AG04449 (cell line): ENCODE measurements at regions of chr12 and their contacts with region 1.

Region 1: DNA sequence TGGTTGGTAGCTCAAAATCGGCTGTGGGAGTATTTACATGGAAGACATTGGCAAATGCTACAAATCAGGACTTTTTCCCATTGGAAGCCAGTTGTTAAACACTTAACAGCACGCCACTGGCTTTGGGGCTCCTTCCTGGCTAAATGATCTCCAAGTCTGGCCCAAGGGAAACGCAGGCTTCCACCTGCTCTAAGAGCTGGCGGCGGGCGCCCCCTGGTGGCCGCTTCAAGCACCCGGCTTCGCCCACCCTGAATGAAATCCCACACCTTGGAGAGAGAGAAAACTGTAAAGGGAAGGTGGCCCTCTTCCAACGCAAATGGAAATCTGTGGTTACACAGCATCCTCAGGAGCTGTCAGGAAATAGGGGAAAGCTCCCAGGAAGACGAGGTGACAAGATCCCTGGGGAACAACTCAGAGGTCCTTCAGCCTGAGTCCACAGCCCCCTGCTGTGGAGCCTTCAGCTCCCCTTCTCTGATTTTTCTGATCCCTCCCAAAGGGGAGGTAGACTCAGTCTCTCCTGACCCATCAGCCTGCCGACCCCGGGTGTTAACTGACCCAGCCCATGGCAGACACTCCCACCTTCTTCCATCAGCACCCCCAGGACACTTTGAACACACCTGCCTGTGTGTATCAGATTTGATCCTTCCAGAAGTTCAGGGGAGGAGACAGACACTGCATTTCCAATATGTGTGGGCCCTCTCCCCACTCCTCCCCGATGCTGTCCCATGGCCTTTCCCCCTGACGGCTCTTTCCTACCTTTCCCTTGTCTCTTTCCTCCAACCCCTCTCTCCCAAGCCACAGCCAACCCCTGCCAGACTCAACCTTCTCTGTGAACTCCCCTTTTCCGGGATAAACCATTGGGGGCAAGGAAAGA is 15.4 kb downstream of the SELPLG start:
- DNase-seq: peak; percentile 17
- H3K4me3 ChIP-seq: no peak overlapping the region
- CTCF ChIP-seq: peak; percentile 91

Region 2: DNA sequence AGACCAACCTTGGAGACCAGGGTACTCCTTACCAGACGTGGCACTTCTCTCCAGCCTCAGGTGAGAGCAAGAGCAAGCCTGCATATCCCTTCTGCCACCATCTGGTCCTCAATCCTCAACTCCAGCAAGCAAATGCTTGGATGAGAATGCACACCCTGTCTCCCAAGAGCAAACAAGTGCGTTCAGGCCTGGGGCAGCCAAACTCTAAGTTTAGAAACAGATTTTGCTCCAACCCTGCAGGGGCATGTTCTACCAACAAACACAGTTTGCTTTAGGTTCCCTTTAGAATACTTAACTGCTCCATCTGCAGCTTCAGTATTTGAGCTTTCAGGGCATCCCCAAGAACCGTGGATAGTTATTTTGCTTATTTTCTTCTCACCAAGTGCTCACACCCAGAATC is 159.2 kb before region 1 on chr12:
- CTCF ChIA-PET with region 1: no interaction called
- POLR2A ChIA-PET with region 1: no interaction called
- DNase-seq: no peak
- H3K4me3 ChIP-seq: no peak overlapping the region
- CTCF ChIP-seq: no peak

Region 3: DNA sequence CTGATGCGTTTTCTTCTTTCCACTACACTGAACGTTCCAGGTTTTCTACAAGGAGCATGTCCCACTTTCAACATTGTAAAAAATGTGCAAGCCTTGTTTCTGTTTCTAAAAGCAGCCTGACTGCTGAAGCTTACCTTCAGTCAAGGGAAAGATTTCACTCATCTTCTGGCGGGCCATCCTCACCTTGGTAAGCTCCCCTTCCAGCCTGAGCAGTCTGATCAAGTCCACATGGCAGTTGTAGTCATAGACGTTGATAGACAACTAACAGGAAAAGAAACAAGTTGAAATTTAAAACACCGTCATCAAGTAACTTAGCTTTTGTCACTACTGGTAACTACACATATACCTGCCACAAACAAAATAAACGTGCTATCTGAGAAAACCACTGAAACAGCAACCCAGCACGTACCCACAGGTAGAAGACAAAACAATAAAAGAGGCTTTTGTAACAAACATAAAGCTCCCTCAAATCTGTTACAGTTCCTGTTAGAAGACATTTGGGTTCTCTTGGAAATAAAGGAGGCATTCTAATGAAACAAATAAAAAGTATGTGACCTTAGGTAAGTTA is 69.3 kb before region 1 on chr12:
- CTCF ChIA-PET with region 1: interaction called, 13 read pairs
- POLR2A ChIA-PET with region 1: no interaction called
- DNase-seq: no peak
- H3K4me3 ChIP-seq: no peak overlapping the region
- CTCF ChIP-seq: no peak

Region 4: DNA sequence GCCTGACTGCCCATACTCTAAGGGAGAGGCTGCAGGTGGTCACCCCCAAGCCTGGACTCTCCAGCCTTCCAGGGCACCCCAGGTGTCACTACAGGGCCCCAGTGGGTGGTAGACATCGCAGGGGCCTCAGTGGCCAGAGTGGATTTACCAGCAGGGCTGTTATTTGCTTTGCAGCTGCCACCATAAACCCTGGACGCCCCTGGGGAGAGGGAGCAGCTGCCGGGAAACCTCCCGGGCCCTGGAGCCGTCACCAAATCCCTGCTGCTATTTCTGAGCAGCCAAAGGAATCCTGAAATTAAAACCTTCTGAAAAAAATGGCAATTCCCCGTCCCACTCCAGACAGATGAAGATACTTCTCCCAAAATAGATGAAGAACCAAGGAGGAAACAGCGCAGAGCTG is 34.3 kb before region 1 on chr12:
- CTCF ChIA-PET with region 1: interaction called, 51 read pairs
- POLR2A ChIA-PET with region 1: interaction called, 3 read pairs
- DNase-seq: no peak
- H3K4me3 ChIP-seq: no peak overlapping the region
- CTCF ChIP-seq: no peak

Region 5: DNA sequence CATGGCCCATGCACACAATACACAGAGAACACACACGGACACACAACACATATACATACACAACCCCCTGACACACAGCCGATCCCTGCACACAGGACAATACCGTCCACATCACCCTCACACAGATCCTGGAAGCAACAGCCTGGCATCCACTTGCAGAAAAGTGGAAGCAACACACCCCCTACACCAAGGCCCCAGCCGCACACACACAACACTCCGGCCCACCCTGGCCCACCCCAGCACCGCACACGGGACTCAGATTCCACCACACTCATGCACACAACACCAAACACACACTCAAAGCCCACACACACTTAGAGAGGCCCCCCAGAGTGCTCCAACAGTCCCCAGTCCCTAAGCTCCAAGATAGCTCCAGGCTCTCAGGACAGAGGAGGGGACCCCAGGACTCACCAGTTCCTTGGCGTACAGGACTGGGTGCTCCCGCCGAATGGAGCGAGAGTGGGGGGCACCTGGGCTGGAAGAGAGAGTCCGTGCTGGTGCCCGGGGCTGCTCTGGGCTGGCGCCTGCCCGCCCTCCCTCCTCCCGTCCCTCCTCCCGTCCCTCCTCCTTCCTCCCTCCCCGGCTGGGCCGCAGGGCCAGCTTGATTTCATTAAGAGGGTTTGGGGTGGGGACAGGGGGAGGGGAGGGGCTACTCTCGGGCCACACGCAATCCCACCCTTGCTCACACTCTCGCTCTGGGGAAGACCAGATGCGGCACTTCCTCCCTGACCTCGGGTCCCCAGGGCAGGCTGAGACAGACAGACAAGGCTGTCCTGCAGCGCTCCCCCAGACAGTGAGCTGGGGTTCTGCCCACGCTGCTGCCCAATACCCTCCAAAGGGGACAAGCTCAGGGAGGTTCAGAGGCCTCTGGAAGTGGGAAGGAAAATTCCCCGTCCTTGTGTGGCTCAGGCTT is 20.5 kb before region 1 on chr12 and contains the start of gene TMEM119:
- CTCF ChIA-PET with region 1: interaction called, 60 read pairs
- POLR2A ChIA-PET with region 1: no interaction called
- DNase-seq: no peak
- H3K4me3 ChIP-seq: peak within 1 kb of the TSS; percentile 76
- CTCF ChIP-seq: no peak

Region 6: GRCh38 chr12:108640802-108641445 is 22.6 kb after region 1 on chr12:
- CTCF ChIA-PET with region 1: interaction called, 17 read pairs
- POLR2A ChIA-PET with region 1: no interaction called
- DNase-seq: no peak
- H3K4me3 ChIP-seq: no peak overlapping the region
- CTCF ChIP-seq: no peak